ENCODE measurements at regions of chr14 and their contacts with region 1.

Region 1: GRCh38 chr14:44912041-44912869 is 49.5 kb downstream of the KLHL28 start:
- DNase-seq: no peak
- H3K4me3 ChIP-seq: peak overlapping the region; percentile 45 to 67 (median 59)
- H3K27ac ChIP-seq: peak overlapping the region; percentile 2 to 47 (median 24)
- H3K4me1 ChIP-seq: peaks cover 0 to 16% (median 9%) of the 10 kb centered on the region in 4 donors
- H3K27me3 ChIP-seq: peaks cover 0 to 3% (median 0%) of the 10 kb centered on the region in 3 donors
- CTCF ChIP-seq: no peak
- EP300 ChIP-seq: no peak
- POLR2A ChIP-seq: no peak

Region 2: DNA sequence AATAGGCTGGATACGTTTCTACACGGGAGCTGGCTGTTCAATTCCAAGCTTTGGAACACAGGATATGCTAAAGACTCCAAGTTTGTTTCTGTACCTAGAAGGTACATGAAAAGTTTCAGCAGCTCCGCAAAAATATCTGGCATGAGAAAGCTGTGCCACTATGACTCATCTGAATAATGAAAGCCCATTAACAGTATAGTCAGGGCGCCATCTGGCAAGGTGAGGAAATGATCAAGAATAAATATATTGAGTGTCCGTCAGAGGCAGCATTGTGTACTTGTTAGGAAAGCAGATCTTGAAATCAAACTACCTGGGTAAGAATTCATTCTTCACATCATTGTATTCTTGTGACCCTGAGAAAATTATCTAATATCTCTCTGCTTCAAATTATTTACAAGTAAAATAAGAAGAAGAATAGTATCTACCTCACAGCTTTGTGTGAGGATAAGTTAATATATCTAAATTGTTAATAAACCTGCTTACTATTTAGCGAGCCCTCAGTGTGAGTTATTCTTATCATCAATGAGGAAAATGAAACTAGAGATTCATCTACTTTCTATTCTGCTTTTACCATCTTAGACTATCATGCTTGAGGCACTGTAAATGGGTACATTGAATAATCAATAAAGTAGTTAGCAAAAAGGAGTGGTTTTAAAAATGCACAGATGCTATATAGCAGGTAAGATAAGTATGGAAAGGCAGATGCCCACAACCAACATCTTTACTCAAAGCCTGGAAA is 458.7 kb before region 1 on chr14:
- intact Hi-C with region 1: no loop called
- DNase-seq: no peak
- H3K4me3 ChIP-seq: no peak overlapping the region
- H3K27ac ChIP-seq: no peak overlapping the region
- H3K4me1 ChIP-seq: no peaks in the 10 kb centered on the region
- H3K27me3 ChIP-seq: no peaks in the 10 kb centered on the region
- CTCF ChIP-seq: no peak
- EP300 ChIP-seq: no peak
- POLR2A ChIP-seq: no peak

Region 3: GRCh38 chr14:44576356-44576755 is 335.9 kb before region 1 on chr14:
- intact Hi-C with region 1: no loop called
- DNase-seq: no peak
- H3K4me3 ChIP-seq: no peak overlapping the region
- H3K27ac ChIP-seq: no peak overlapping the region
- H3K4me1 ChIP-seq: no peaks in the 10 kb centered on the region
- H3K27me3 ChIP-seq: no peaks in the 10 kb centered on the region
- CTCF ChIP-seq: no peak
- EP300 ChIP-seq: no peak
- POLR2A ChIP-seq: no peak

Region 4: GRCh38 chr14:44961604-44962333 is 49.5 kb after region 1 on chr14 and contains the starts of genes KLHL28 and TOGARAM1:
- intact Hi-C with region 1: loop called (anchors 5 kb)
- DNase-seq: peak; percentile 99
- H3K4me3 ChIP-seq: peak within 1 kb of the TSS; percentile 59 to 86 (median 72)
- H3K27ac ChIP-seq: peak within 1 kb of the TSS; percentile 91 to 94 (median 92)
- H3K4me1 ChIP-seq: peaks cover 0 to 67% (median 56%) of the 10 kb centered on the region in 4 donors
- H3K27me3 ChIP-seq: no peaks in the 10 kb centered on the region
- CTCF ChIP-seq: no peak
- EP300 ChIP-seq: peak in 1 of 4 donors; percentile 78
- POLR2A ChIP-seq: peak; percentile 84 to 90
- total RNA-seq, gene KLHL28: 9.0 to 16.5 (median 11.3) TPM
- total RNA-seq, gene TOGARAM1: 14.3 to 27.1 (median 19.8) TPM

Region 5: GRCh38 chr14:45253068-45253753 is 341.0 kb after region 1 on chr14 and contains the start of gene MIS18BP1:
- intact Hi-C with region 1: loop called (anchors 5 kb)
- DNase-seq: peak; percentile 96
- H3K4me3 ChIP-seq: peak within 1 kb of the TSS; percentile 71 to 79 (median 72)
- H3K27ac ChIP-seq: peak within 1 kb of the TSS; percentile 87 to 93 (median 91)
- H3K4me1 ChIP-seq: peaks cover 0 to 17% (median 11%) of the 10 kb centered on the region in 4 donors
- H3K27me3 ChIP-seq: no peaks in the 10 kb centered on the region
- CTCF ChIP-seq: peak; percentile 49 to 81 (median 67)
- EP300 ChIP-seq: peak in 1 of 4 donors; percentile 62
- POLR2A ChIP-seq: peak; percentile 25 to 45
- total RNA-seq, gene MIS18BP1: 15.0 to 43.8 (median 21.1) TPM

Region 6: GRCh38 chr14:45267071-45267470 is 354.8 kb after region 1 on chr14:
- intact Hi-C with region 1: loop called (anchors 5 kb)
- DNase-seq: no peak
- H3K4me3 ChIP-seq: no peak overlapping the region
- H3K27ac ChIP-seq: no peak overlapping the region
- H3K4me1 ChIP-seq: no peaks in the 10 kb centered on the region
- H3K27me3 ChIP-seq: no peaks in the 10 kb centered on the region
- CTCF ChIP-seq: no peak
- EP300 ChIP-seq: no peak
- POLR2A ChIP-seq: no peak